ENCODE measurements at regions of chr2 and their contacts with region 1.

Region 1: DNA sequence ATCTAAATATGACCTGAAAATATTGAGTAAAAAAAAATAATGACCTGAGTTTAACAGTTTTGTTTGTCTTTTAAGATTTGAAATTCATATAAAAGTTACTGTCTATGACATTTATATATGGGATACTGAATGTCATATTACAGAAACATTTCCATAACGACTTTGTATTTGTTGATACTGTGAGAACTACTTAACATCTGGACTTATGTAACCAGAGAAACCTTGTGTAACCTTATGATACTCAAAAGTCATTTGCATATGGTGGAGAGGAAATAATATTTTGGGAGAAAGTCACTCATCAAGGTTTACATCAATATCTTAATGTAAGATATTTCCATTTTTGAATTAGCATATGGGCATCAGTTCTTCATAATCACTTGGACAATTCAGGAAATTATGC is 12.6 kb downstream of the MFSD6 start:
- DNase-seq: no peak
- ATAC-seq: no peak
- H3K4me3 ChIP-seq: no peak overlapping the region
- H3K27ac ChIP-seq: no peak overlapping the region
- H3K4me1 ChIP-seq: no peaks in the 10 kb centered on the region; a peak in 1 of 5 replicates
- H3K27me3 ChIP-seq: no peaks in the 10 kb centered on the region
- CTCF ChIP-seq: no peak
- EP300 ChIP-seq: no peak
- POLR2A ChIP-seq: no peak
- RAD21 ChIP-seq: no peak

Region 2: GRCh38 chr2:190110131-190110530 is 310.7 kb before region 1 on chr2:
- CTCF ChIA-PET with region 1: no interaction called
- POLR2A ChIA-PET with region 1: no interaction called
- in situ Hi-C with region 1: no loop called
- intact Hi-C with region 1: no loop called
- DNase-seq: no peak
- ATAC-seq: no peak
- H3K4me3 ChIP-seq: no peak overlapping the region
- H3K27ac ChIP-seq: no peak overlapping the region
- H3K4me1 ChIP-seq: no peaks in the 10 kb centered on the region
- H3K27me3 ChIP-seq: no peaks in the 10 kb centered on the region
- CTCF ChIP-seq: no peak
- EP300 ChIP-seq: no peak
- POLR2A ChIP-seq: no peak
- RAD21 ChIP-seq: no peak

Region 3: GRCh38 chr2:190121971-190122370 is 298.8 kb before region 1 on chr2:
- CTCF ChIA-PET with region 1: no interaction called
- POLR2A ChIA-PET with region 1: no interaction called
- in situ Hi-C with region 1: no loop called
- intact Hi-C with region 1: no loop called
- DNase-seq: peak in 2 of 4 experiments; percentile 15 to 17
- ATAC-seq: peak; percentile 61
- H3K4me3 ChIP-seq: no peak overlapping the region
- H3K27ac ChIP-seq: no peak overlapping the region
- H3K4me1 ChIP-seq: no peaks in the 10 kb centered on the region; a peak in 1 of 5 replicates
- H3K27me3 ChIP-seq: no peaks in the 10 kb centered on the region
- CTCF ChIP-seq: peak; percentile 27 to 47 (median 37); a peak in 4 of 6 replicates
- EP300 ChIP-seq: no peak
- POLR2A ChIP-seq: no peak
- RAD21 ChIP-seq: peak in 1 of 2 experiments; percentile 55; a peak in 2 of 4 replicates

Region 4: GRCh38 chr2:190497428-190497827 is 76.6 kb after region 1 on chr2:
- CTCF ChIA-PET with region 1: no interaction called
- POLR2A ChIA-PET with region 1: no interaction called
- in situ Hi-C with region 1: no loop called
- intact Hi-C with region 1: loop called (anchors 5 kb)
- DNase-seq: peak in 1 of 4 experiments; percentile 8
- ATAC-seq: peak; percentile 85
- H3K4me3 ChIP-seq: no peak overlapping the region
- H3K27ac ChIP-seq: no peak overlapping the region
- H3K4me1 ChIP-seq: peaks cover 4% of the 10 kb centered on the region in 2 experiments; a peak in 2 of 5 replicates
- H3K27me3 ChIP-seq: no peaks in the 10 kb centered on the region
- CTCF ChIP-seq: no peak
- EP300 ChIP-seq: no peak
- POLR2A ChIP-seq: no peak
- RAD21 ChIP-seq: no peak

Measured in K562 (cell line).